ENCODE measurements at regions of chr15 and their contacts with region 1.

Region 1: GRCh38 chr15:82726816-82727215 is 17.1 kb upstream of the AP3B2 start:
- DNase-seq: no peak
- ATAC-seq: no peak
- H3K4me3 ChIP-seq: no peak overlapping the region
- H3K27ac ChIP-seq: no peak overlapping the region
- H3K4me1 ChIP-seq: no peaks in the 10 kb centered on the region
- H3K27me3 ChIP-seq: no peaks in the 10 kb centered on the region
- CTCF ChIP-seq: no peak

Region 2: GRCh38 chr15:82571722-82572222 is 155.0 kb before region 1 on chr15:
- intact Hi-C with region 1: loop called in 1 of 2 experiments (anchors 10 kb)
- DNase-seq: peak; percentile 66 to 71
- ATAC-seq: peak; percentile 64 to 85 (median 72)
- H3K4me3 ChIP-seq: peak overlapping the region; percentile 47
- H3K27ac ChIP-seq: no peak overlapping the region
- H3K4me1 ChIP-seq: peaks cover 4% of the 10 kb centered on the region
- H3K27me3 ChIP-seq: peaks cover 0 to 3% (median 2%) of the 10 kb centered on the region in 3 donors
- CTCF ChIP-seq: no peak

Region 3: DNA sequence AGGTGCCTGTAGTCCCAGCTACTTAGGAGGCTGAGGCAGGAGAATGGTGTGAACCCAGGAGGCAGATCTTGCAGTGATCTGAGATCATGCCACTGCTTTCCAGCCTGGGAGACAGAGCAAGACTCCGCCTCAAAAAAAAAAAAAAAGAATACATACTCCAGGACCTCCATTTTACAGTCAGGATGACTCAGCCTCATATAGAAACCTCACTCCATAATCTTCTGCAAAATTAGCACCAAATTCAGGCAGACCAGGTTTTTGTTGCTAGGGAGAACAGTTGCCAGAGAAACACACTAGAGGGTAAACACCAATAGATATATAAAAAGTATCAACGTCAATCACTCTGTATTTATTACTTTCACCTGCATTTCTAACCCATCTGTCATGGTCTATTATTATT is 11.2 kb after region 1 on chr15:
- intact Hi-C with region 1: no loop called
- DNase-seq: no peak
- ATAC-seq: no peak
- H3K4me3 ChIP-seq: no peak overlapping the region
- H3K27ac ChIP-seq: no peak overlapping the region
- H3K4me1 ChIP-seq: no peaks in the 10 kb centered on the region
- H3K27me3 ChIP-seq: no peaks in the 10 kb centered on the region
- CTCF ChIP-seq: no peak

Measured in psoas muscle (tissue), 8 donors.